Activated CD4-positive, alpha-beta memory T cell treated with anti-CD3 and anti-CD28 coated beads for 36 hours (primary cell): ENCODE measurements at regions of chr3 and their contacts with region 1.

Region 1: DNA sequence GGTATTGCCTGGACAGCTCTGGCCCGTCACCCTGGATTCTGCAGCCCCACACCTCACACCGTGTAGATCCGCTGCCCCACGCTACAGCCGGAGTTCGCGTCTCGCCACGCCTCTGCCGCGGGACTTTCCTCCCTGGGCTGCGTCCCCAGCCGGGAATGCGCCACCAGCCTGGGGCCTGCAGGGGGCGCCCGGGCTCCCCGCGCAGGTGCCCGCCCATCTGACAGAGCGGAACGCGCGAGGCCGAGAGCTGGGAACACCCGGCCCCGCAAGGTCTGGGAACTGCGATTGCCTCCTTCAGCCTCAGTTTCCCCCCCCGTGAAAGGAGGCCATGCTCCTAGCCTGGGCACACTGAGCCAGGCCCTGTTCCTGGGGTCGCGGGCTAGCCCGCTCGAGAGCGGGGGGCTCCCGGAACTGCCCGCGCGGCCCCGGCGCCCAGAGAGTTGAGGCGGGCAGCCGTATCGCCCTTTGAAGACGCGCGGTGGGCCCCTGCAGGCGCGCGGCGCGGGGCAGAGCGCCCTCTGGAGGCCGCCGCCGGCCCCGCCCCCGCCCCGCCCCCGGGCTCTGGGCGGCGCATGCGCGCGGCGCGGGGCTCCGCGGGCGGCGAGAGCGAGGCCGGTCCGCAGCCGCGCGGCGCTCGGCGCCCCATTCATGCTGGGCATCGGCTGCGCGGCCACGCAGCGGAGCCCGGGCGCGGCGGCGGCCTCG is at the start of gene PLXNA1:
- DNase-seq: peak; percentile 88
- H3K4me3 Mint-ChIP-seq: peak within 1 kb of the TSS; percentile 79
- H3K27ac Mint-ChIP-seq: peak within 1 kb of the TSS; percentile 88
- H3K4me1 Mint-ChIP-seq: peaks cover 14% of the 10 kb centered on the region
- H3K27me3 Mint-ChIP-seq: peaks cover 7% of the 10 kb centered on the region
- total RNA-seq, gene PLXNA1: 8.8 to 9.3 TPM

Region 2: DNA sequence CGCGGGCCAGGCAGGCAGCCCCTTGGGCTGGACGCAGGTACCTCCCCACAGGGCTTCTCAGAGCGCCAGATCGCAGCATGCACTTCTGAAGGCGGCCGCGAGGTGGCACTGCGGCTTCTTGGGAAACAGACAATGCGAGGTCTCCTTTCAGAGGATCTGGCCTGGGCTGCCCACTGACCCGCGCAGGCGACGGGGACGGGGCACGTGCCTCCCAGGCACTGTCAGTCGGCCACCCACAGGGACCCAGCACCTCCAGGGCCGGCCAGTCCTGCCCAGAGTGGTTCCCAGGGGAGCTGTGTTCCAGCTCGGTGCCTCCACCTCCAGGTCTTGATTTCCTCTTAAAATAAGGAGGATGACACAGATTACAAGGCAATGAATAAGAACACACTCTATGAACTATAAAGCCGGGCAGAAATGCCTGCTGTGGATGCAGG is 303.3 kb before region 1 on chr3:
- CTCF ChIA-PET with region 1: interaction called, 18 read pairs
- POLR2A ChIA-PET with region 1: no interaction called
- intact Hi-C with region 1: loop called (anchors 1 kb)
- DNase-seq: peak; percentile 84
- H3K4me3 Mint-ChIP-seq: peak overlapping the region; percentile 28
- H3K27ac Mint-ChIP-seq: no peak overlapping the region
- H3K4me1 Mint-ChIP-seq: peaks cover 5% of the 10 kb centered on the region
- H3K27me3 Mint-ChIP-seq: peaks cover 13% of the 10 kb centered on the region

Region 3: DNA sequence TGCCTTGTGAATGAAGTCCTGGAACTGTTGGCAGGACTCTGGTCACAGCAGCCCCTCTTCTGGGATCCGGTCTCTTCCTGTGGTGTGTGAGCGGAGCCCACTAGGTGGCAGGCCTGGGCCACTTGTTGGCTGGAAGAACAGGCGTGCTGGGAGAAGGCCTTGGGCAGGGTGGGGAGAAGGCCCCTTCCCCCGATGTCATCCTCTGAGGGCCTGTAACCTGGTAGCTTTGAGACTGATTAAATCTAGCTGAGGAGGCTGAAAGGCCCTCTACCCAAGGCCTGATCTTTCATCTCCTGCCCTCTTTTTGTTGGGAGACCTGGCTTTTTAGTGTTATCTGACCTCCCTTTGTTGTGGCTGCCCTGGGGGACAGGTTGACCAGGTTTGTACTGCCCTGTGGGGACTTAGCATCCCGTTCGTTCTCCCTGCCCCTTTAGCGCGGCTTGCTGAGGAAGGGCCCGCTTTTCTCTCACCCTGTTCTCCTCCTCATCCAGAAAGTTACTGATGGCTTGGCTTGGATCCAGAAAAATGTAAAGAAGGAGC is 230.2 kb before region 1 on chr3:
- CTCF ChIA-PET with region 1: interaction called, 9 read pairs
- POLR2A ChIA-PET with region 1: no interaction called
- intact Hi-C with region 1: loop called (anchors 1 kb)
- DNase-seq: peak; percentile 75
- H3K4me3 Mint-ChIP-seq: no peak overlapping the region
- H3K27ac Mint-ChIP-seq: no peak overlapping the region
- H3K4me1 Mint-ChIP-seq: peaks cover 5% of the 10 kb centered on the region
- H3K27me3 Mint-ChIP-seq: no peaks in the 10 kb centered on the region

Region 4: DNA sequence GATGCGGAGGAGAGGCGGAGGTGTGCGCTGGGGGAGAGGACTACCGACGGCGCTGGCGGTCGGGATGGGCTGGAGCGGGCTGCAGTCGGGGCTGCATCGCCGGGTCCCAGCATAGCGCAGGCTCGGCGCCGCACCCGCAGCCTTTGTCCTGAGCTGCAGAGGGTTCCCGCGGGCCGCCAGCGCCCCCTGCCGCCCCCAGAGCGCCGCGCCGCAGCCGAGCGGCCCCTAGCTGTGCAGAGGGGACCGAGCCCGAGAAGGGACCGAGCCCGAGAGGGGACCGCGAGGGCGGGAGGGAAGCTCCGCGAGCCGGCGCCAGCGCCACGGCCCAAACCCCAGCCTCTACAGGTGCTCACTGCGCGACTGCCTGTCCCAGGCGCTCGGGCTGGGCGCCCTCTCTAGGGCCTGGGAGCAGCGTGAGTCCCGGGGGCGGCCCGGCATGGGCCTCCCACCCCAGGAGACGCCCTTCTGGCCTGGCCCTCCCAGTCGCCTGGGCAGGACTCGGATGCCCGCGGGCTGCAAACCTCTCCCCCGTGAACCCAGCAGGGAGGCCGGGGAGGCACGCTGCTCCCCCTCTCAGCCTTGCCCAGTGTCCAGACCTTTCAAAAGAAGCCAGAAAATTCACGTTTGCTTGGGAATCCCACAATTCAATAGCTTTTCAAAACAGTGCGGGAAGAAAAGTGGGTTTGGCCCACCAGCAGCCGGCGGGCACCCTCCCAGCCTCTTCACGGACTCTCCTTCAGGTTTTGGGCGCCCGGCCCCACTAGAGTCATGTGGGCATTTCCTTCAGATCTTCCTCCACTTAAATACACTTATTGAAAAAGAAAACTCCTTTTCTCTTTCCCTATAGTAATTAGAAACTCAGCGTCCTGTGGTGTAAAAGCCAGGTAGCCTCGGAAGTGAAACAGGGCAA is 473.2 kb after region 1 on chr3:
- CTCF ChIA-PET with region 1: interaction called, 6 read pairs
- POLR2A ChIA-PET with region 1: no interaction called
- intact Hi-C with region 1: loop called (anchors 5 kb)
- DNase-seq: peak; percentile 75
- H3K4me3 Mint-ChIP-seq: no peak overlapping the region
- H3K27ac Mint-ChIP-seq: no peak overlapping the region
- H3K4me1 Mint-ChIP-seq: peaks cover 16% of the 10 kb centered on the region
- H3K27me3 Mint-ChIP-seq: peaks cover 62% of the 10 kb centered on the region

Region 5: GRCh38 chr3:127975153-127976029 is 992.8 kb after region 1 on chr3:
- CTCF ChIA-PET with region 1: no interaction called
- POLR2A ChIA-PET with region 1: no interaction called
- intact Hi-C with region 1: no loop called
- DNase-seq: no peak
- H3K4me3 Mint-ChIP-seq: no peak overlapping the region
- H3K27ac Mint-ChIP-seq: no peak overlapping the region
- H3K4me1 Mint-ChIP-seq: no peaks in the 10 kb centered on the region
- H3K27me3 Mint-ChIP-seq: peaks cover 15% of the 10 kb centered on the region